CD8-positive, alpha-beta T cell (primary cell): ENCODE measurements at regions of chr12 and their contacts with region 1.

Region 1: GRCh38 chr12:103956516-103957027 is 9.1 kb upstream of the TDG start:
- DNase-seq: peak in 2 of 9 experiments; percentile 1 to 9
- ATAC-seq: no peak
- H3K4me3 ChIP-seq: peak overlapping the region; percentile 65 to 86
- H3K4me3 Mint-ChIP-seq: peak overlapping the region; percentile 99
- H3K27ac ChIP-seq: peak overlapping the region; percentile 78 to 79
- H3K27ac Mint-ChIP-seq: peak overlapping the region; percentile 99
- H3K4me1 ChIP-seq: peaks cover 22% of the 10 kb centered on the region
- H3K4me1 Mint-ChIP-seq: peaks cover 31% of the 10 kb centered on the region
- H3K27me3 ChIP-seq: no peaks in the 10 kb centered on the region
- H3K27me3 Mint-ChIP-seq: no peaks in the 10 kb centered on the region
- CTCF ChIP-seq: no peak

Region 2: DNA sequence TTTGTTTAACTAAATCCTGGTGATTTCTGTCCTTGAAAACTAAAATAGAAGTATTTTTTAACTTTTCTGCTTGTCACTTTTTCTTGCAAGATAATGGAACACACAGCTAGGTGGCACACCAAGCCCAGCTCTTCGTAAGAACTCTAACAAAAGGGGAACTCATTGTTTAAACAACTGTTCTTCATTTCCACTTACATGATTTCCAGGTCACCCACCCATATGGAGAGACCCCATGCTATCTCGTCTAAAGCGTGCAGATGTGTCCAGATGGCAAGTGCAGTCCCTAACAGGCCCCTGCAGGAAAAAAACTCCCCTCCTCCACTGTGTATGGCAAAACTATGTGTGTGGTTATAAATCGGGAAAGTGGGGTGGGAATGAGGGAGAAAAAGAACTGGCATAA is 72.3 kb before region 1 on chr12:
- CTCF ChIA-PET with region 1: interaction called, 5 read pairs
- POLR2A ChIA-PET with region 1: interaction called, 3 read pairs
- intact Hi-C with region 1: loop called in 1 of 2 experiments (anchors 2 kb)
- DNase-seq: peak; percentile 10 to 76 (median 43)
- ATAC-seq: peak; percentile 67
- H3K4me3 ChIP-seq: no peak overlapping the region
- H3K4me3 Mint-ChIP-seq: no peak overlapping the region
- H3K27ac ChIP-seq: no peak overlapping the region
- H3K27ac Mint-ChIP-seq: no peak overlapping the region
- H3K4me1 ChIP-seq: peaks cover 11% of the 10 kb centered on the region
- H3K4me1 Mint-ChIP-seq: peaks cover 32% of the 10 kb centered on the region
- H3K27me3 ChIP-seq: no peaks in the 10 kb centered on the region
- H3K27me3 Mint-ChIP-seq: no peaks in the 10 kb centered on the region
- CTCF ChIP-seq: peak; percentile 71

Region 3: DNA sequence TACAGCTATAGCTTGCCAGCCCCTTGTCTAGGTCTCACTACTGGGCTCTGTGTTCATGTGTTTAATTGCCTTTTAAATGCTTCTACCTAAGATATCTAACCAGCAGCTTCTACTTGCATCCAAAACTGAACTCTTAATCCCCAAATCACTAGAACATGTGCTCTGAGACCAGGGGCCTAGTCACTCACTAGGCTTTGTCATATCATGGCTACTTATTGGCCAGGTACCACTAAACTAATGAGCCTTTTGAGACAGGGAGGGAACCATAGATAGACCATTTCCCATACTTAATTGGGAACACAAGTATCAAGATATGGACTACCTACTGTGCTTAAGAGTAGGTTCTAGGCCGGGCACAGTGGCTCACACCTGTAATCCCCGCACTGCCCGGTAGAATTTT is 19.9 kb before region 1 on chr12:
- CTCF ChIA-PET with region 1: interaction called, 3 read pairs
- POLR2A ChIA-PET with region 1: interaction called, 4 read pairs
- intact Hi-C with region 1: loop called in 1 of 2 experiments (anchors 2 kb)
- DNase-seq: no peak
- ATAC-seq: no peak
- H3K4me3 ChIP-seq: no peak overlapping the region
- H3K4me3 Mint-ChIP-seq: no peak overlapping the region
- H3K27ac ChIP-seq: no peak overlapping the region
- H3K27ac Mint-ChIP-seq: peak overlapping the region; percentile 71
- H3K4me1 ChIP-seq: peaks cover 32% of the 10 kb centered on the region
- H3K4me1 Mint-ChIP-seq: peaks cover 63% of the 10 kb centered on the region
- H3K27me3 ChIP-seq: no peaks in the 10 kb centered on the region
- H3K27me3 Mint-ChIP-seq: no peaks in the 10 kb centered on the region
- CTCF ChIP-seq: no peak

Region 4: DNA sequence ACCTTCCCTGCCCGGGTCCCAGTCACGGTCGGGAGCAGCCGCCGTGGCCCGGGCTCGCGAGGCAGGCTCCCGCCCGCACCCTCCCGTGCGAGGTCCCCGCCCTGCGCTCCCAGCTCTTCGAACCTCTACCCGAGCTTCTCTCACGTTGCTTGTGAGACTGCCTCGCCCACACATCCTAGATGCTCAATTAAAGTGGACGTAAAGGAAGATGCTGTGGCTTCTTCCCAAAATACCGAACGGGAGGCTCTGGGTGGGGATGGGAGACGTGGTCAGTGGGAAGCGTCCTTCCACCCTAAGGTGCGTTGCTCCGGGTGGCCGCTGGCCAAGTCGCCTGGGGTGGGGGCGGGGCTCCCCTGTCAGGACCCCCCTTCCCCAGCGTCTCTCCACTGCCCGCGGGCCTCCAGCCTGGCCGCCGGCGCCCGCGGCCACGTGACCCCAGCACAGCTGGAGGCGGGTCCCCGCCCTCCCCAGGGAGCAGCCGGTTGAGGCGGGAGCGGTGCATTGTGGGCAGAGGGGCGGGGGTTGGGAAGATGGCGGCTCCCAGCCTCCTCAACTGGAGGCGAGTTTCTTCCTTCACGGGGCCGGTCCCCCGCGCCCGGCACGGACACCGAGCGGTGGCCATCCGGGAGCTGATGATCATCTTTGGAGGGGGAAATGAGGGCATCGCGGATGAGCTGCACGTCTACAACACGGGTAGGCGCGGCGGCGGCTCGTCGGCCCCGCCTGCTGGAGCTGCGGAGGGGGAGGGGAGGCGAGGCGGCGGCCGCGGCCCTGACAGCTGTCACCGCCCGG is 107.7 kb after region 1 on chr12 and contains the start of gene HCFC2:
- CTCF ChIA-PET with region 1: no interaction called
- POLR2A ChIA-PET with region 1: interaction called, 3 read pairs
- intact Hi-C with region 1: loop called in 1 of 2 experiments (anchors 2 kb)
- DNase-seq: peak; percentile 71 to 92 (median 87)
- ATAC-seq: peak; percentile 92
- H3K4me3 ChIP-seq: peak within 1 kb of the TSS; percentile 75 to 98
- H3K4me3 Mint-ChIP-seq: peak within 1 kb of the TSS; percentile 95
- H3K27ac ChIP-seq: peak within 1 kb of the TSS; percentile 61 to 64
- H3K27ac Mint-ChIP-seq: peak within 1 kb of the TSS; percentile 93
- H3K4me1 ChIP-seq: peaks cover 7% of the 10 kb centered on the region
- H3K4me1 Mint-ChIP-seq: peaks cover 29% of the 10 kb centered on the region
- H3K27me3 ChIP-seq: peaks cover 0 to 3% of the 10 kb centered on the region in 2 experiments
- H3K27me3 Mint-ChIP-seq: peaks cover 4% of the 10 kb centered on the region
- CTCF ChIP-seq: no peak
- total RNA-seq, gene HCFC2: 13.9 to 16.7 TPM

Region 5: DNA sequence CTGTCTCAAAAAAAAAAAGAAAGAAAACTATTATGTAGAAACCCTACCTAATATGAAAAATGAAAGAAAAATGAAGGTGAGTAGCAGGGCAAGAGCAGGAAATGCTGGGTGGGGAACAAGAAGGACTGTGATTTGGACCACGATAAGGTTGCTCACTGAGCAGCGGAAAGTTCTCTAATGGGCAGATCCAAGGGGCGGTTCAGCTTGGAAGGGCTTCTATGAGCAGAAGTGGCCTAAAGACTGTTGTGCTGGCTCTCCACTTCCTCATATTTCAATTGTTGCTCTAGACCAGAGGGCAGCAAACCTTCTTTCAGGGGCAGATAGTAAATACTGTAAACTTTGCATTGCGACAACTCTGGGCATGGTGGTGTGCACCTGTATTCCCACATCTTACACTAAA is 197.7 kb after region 1 on chr12:
- CTCF ChIA-PET with region 1: no interaction called
- POLR2A ChIA-PET with region 1: no interaction called
- intact Hi-C with region 1: no loop called
- DNase-seq: no peak
- ATAC-seq: no peak
- H3K4me3 ChIP-seq: no peak overlapping the region
- H3K4me3 Mint-ChIP-seq: no peak overlapping the region
- H3K27ac ChIP-seq: no peak overlapping the region
- H3K27ac Mint-ChIP-seq: no peak overlapping the region
- H3K4me1 ChIP-seq: no peaks in the 10 kb centered on the region
- H3K4me1 Mint-ChIP-seq: peaks cover 7% of the 10 kb centered on the region
- H3K27me3 ChIP-seq: no peaks in the 10 kb centered on the region
- H3K27me3 Mint-ChIP-seq: peaks cover 5% of the 10 kb centered on the region
- CTCF ChIP-seq: no peak

Region 6: DNA sequence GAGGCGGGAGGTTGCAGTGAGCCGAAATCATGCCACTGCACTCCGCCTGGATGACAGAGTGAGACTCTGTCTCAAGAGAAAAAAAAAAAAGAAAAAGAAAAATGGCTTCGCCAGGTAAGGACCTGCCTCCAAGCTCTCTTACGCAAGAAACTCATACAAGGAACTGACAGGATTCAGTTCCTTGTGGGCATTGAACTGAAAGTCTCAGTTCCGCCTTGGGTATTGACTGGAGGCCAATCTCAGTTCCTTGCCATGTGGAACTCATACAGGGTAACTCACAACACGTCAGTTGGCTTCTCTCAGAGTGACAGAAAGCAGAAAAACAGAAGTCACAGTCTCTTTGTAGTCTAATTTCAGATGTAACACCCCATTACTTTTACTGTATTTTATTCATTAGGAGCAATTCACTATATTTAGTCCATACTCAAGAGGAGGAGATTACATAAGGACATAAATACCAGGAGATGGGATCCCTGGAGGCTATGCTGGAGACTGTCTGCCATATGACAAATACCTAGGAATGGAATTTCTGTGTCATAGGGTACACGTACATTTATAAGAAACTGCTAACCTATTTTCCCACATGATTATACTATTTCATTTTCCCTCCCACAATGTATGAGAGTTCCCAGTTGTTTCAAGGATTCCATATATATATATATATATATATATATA is 1018.2 kb after region 1 on chr12:
- CTCF ChIA-PET with region 1: no interaction called
- POLR2A ChIA-PET with region 1: no interaction called
- intact Hi-C with region 1: no loop called
- DNase-seq: peak in 1 of 9 experiments; percentile 43
- ATAC-seq: no peak
- H3K4me3 ChIP-seq: no peak overlapping the region
- H3K4me3 Mint-ChIP-seq: no peak overlapping the region
- H3K27ac ChIP-seq: no peak overlapping the region
- H3K27ac Mint-ChIP-seq: no peak overlapping the region
- H3K4me1 ChIP-seq: no peaks in the 10 kb centered on the region
- H3K4me1 Mint-ChIP-seq: no peaks in the 10 kb centered on the region
- H3K27me3 ChIP-seq: no peaks in the 10 kb centered on the region
- H3K27me3 Mint-ChIP-seq: no peaks in the 10 kb centered on the region
- CTCF ChIP-seq: no peak